ENCODE measurements at regions of chr4 and their contacts with region 1.

Region 1: GRCh38 chr4:40840985-40841571 is 91.3 kb downstream of the NSUN7 start:
- DNase-seq: peak; percentile 59 to 75
- H3K4me3 ChIP-seq: no peak overlapping the region
- H3K27ac ChIP-seq: no peak overlapping the region
- H3K4me1 ChIP-seq: no peaks in the 10 kb centered on the region
- H3K27me3 ChIP-seq: no peaks in the 10 kb centered on the region
- CTCF ChIP-seq: peak; percentile 78

Region 2: DNA sequence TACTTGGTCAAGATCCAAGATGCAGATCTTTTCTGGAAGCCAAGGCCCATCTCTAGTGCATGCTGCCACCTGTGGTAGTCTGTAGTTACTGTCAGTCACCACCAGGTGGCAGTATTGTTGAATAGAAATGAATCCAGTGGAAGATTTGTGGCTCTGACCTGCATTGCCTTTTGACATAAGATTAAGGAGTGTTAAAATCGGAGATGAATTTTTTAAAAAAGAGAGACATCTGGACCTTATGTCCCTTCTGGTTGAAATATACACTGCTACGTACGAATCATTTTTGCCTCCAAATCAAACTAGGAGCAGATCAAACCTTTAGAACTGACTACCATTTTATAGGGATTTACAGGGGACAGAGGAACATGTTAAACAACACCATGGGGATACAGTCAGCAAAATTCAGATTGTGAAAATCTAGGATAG is 691.1 kb before region 1 on chr4:
- CTCF ChIA-PET with region 1: no interaction called
- POLR2A ChIA-PET with region 1: no interaction called
- intact Hi-C with region 1: no loop called
- DNase-seq: peak; percentile 40 to 61
- H3K4me3 ChIP-seq: no peak overlapping the region
- H3K27ac ChIP-seq: no peak overlapping the region
- H3K4me1 ChIP-seq: no peaks in the 10 kb centered on the region
- H3K27me3 ChIP-seq: no peaks in the 10 kb centered on the region
- CTCF ChIP-seq: peak; percentile 94

Region 3: GRCh38 chr4:40897557-40898203 is 56.6 kb after region 1 on chr4:
- CTCF ChIA-PET with region 1: interaction called, 11 read pairs
- POLR2A ChIA-PET with region 1: no interaction called
- intact Hi-C with region 1: no loop called
- DNase-seq: peak; percentile 66 to 69
- H3K4me3 ChIP-seq: peak overlapping the region; percentile 64
- H3K27ac ChIP-seq: no peak overlapping the region
- H3K4me1 ChIP-seq: no peaks in the 10 kb centered on the region
- H3K27me3 ChIP-seq: no peaks in the 10 kb centered on the region
- CTCF ChIP-seq: peak; percentile 90

Region 4: GRCh38 chr4:40933272-40934053 is 92.4 kb after region 1 on chr4:
- CTCF ChIA-PET with region 1: no interaction called
- POLR2A ChIA-PET with region 1: no interaction called
- intact Hi-C with region 1: no loop called
- DNase-seq: no peak
- H3K4me3 ChIP-seq: no peak overlapping the region
- H3K27ac ChIP-seq: no peak overlapping the region
- H3K4me1 ChIP-seq: no peaks in the 10 kb centered on the region
- H3K27me3 ChIP-seq: no peaks in the 10 kb centered on the region
- CTCF ChIP-seq: no peak